ENCODE measurements at regions of chr4 and their contacts with region 1.

Region 1: DNA sequence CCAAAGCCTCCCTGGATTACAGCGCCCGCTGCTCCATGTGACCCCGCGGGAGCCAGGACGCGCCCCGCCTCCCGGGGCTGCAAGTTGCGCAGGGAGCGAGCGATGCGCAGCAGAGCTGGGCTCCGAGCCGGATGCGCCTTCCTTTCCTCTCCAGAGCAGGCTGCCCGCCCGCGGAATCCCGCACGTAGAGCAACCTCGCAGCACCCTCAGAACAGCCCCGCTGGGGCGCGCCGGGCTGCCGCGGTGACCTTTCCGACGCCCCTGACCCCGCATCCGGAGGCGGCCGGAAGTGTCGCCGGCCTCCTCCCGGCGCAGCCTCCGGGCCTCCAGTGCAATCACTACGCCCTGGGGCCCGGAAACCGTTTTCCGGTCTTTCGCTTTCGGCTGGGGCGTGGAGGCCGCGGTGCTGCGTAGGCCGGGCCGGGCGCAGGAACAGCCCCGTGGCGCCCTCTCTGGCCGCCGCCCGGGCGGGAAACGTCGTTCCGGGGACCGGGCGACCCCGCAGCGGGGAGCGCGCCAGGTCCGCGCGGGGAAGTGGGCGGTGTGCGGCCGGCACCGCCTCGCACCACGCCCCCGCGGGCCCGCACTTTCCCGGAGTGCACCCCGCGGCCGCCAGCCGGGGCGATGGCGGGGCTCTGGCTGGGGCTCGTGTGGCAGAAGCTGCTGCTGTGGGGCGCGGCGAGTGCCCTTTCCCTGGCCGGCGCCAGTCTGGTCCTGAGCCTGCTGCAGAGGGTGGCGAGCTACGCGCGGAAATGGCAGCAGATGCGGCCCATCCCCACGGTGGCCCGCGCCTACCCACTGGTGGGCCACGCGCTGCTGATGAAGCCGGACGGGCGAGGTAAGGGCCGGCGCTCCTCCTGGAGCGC is at the start of gene CYP4V2:
- DNase-seq: peak; percentile 88
- H3K4me3 Mint-ChIP-seq: peak within 1 kb of the TSS; percentile 86
- H3K27ac Mint-ChIP-seq: peak within 1 kb of the TSS; percentile 92
- H3K4me1 Mint-ChIP-seq: peaks cover 33% of the 10 kb centered on the region
- H3K27me3 Mint-ChIP-seq: no peaks in the 10 kb centered on the region
- total RNA-seq, gene CYP4V2: 3.3 TPM

Region 2: DNA sequence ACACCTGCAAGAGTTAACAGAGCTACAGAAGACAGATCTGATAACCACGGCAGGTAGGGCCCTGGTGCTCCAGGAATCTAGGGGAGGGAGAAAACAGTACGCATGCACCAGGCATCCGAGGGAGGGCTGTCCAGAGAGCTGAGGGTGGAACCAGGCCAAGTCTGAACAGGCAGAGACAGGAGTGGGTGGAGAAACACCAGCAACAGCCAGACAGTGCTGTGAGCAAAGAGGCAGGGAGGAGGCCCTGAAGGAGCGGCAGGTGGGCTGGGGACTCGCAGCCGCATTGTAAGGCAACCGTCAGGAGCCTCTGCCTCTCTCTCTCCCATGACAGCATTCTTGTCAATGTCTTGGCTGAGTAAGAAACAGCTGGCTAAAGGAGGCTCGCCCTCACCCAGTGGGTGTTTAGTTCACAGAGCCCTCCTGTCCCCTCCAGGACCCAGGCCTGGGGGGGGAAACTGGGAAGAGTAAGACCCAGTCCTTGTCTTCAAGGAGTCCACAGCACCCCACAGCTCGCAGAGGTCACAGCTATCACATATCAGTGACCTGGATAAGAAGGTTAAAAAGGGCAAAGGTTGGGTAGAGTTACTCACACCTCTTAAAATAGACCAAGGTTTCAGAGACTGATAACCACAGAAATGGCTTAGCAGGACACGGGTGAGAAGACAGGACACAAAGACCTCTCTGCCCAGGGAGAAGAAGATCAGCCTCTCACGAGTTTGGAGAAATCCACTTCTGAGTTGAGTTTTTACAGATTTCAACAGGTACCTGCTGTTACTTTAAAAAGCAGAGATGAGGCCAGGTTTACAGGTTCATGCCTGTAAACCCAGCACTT is 1376.2 kb before region 1 on chr4:
- CTCF ChIA-PET with region 1: no interaction called
- intact Hi-C with region 1: no loop called
- DNase-seq: no peak
- H3K4me3 Mint-ChIP-seq: no peak overlapping the region
- H3K27ac Mint-ChIP-seq: no peak overlapping the region
- H3K4me1 Mint-ChIP-seq: peaks cover 42% of the 10 kb centered on the region
- H3K27me3 Mint-ChIP-seq: no peaks in the 10 kb centered on the region

Region 3: GRCh38 chr4:185425647-185426352 is 765.6 kb before region 1 on chr4 and contains the start of gene UFSP2:
- CTCF ChIA-PET with region 1: no interaction called
- intact Hi-C with region 1: loop called (anchors 5 kb)
- DNase-seq: peak; percentile 86
- H3K4me3 Mint-ChIP-seq: peak within 1 kb of the TSS; percentile 76
- H3K27ac Mint-ChIP-seq: peak within 1 kb of the TSS; percentile 96
- H3K4me1 Mint-ChIP-seq: peaks cover 28% of the 10 kb centered on the region
- H3K27me3 Mint-ChIP-seq: peaks cover 1% of the 10 kb centered on the region
- total RNA-seq, gene UFSP2: 24.4 to 30.7 TPM

Region 4: GRCh38 chr4:186067757-186068385 is 123.6 kb before region 1 on chr4:
- CTCF ChIA-PET with region 1: interaction called, 6 read pairs
- intact Hi-C with region 1: loop called (anchors 1 kb)
- DNase-seq: peak; percentile 65
- H3K4me3 Mint-ChIP-seq: no peak overlapping the region
- H3K27ac Mint-ChIP-seq: no peak overlapping the region
- H3K4me1 Mint-ChIP-seq: peaks cover 11% of the 10 kb centered on the region
- H3K27me3 Mint-ChIP-seq: peaks cover 7% of the 10 kb centered on the region

Region 5: DNA sequence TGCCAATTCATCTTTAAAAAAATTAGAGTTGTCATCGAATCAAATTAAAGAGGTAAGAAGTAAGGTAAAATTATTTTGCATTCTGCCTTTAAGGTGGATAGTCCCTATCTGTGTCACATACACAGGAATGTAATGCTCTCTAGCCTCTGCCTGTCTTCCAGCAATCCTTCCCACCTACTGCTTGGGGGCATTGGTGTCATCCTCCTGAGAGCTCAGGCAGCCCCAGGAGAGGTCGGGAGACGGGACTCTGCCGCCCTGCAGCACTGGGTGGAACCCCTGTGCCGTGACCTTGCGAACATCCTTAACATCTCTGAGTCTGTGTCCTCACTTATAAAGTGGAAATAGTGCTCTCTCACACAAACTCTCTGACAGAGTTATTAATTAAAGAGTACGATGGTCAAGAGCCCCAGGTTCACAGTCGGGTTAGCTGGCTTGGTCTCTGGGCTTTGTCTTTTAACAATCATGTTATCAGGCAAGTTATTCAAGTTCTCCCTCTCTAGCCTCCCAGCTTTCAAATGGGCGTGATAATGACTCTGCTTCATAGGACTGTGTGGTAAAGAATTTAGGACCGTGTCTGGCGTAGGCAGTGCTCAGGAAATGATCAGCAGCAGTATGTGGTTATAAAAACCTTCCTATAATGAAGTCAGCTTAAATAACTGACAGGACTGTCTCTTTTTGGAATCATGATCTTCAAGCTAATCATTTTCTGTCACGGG is 112.3 kb before region 1 on chr4:
- CTCF ChIA-PET with region 1: no interaction called
- intact Hi-C with region 1: no loop called
- DNase-seq: no peak
- H3K4me3 Mint-ChIP-seq: no peak overlapping the region
- H3K27ac Mint-ChIP-seq: no peak overlapping the region
- H3K4me1 Mint-ChIP-seq: no peaks in the 10 kb centered on the region
- H3K27me3 Mint-ChIP-seq: peaks cover 3% of the 10 kb centered on the region

Region 6: GRCh38 chr4:186104114-186104889 is 87.1 kb before region 1 on chr4 and contains the start of gene FAM149A:
- CTCF ChIA-PET with region 1: no interaction called
- intact Hi-C with region 1: loop called (anchors 2 kb)
- DNase-seq: peak; percentile 64
- H3K4me3 Mint-ChIP-seq: peak within 1 kb of the TSS; percentile 66
- H3K27ac Mint-ChIP-seq: no peak within 1 kb of the TSS
- H3K4me1 Mint-ChIP-seq: peaks cover 7% of the 10 kb centered on the region
- H3K27me3 Mint-ChIP-seq: peaks cover 45% of the 10 kb centered on the region
- total RNA-seq, gene FAM149A: 0.36 to 0.42 TPM

Region 7: GRCh38 chr4:186144142-186144955 is 47.1 kb before region 1 on chr4:
- CTCF ChIA-PET with region 1: no interaction called
- intact Hi-C with region 1: loop called (anchors 2 kb)
- DNase-seq: peak; percentile 22
- H3K4me3 Mint-ChIP-seq: peak overlapping the region; percentile 65
- H3K27ac Mint-ChIP-seq: no peak overlapping the region
- H3K4me1 Mint-ChIP-seq: peaks cover 2% of the 10 kb centered on the region
- H3K27me3 Mint-ChIP-seq: peaks cover 37% of the 10 kb centered on the region

Region 8: GRCh38 chr4:186161138-186161537 is 30.3 kb before region 1 on chr4:
- CTCF ChIA-PET with region 1: no interaction called
- intact Hi-C with region 1: loop called (anchors 2 kb)
- DNase-seq: peak; percentile 63
- H3K4me3 Mint-ChIP-seq: peak overlapping the region; percentile 53
- H3K27ac Mint-ChIP-seq: no peak overlapping the region
- H3K4me1 Mint-ChIP-seq: peaks cover 4% of the 10 kb centered on the region
- H3K27me3 Mint-ChIP-seq: peaks cover 3% of the 10 kb centered on the region

Region 9: GRCh38 chr4:186201535-186202230 is 10.2 kb after region 1 on chr4:
- CTCF ChIA-PET with region 1: interaction called, 44 read pairs
- intact Hi-C with region 1: loop called (anchors 1 kb)
- DNase-seq: peak; percentile 79
- H3K4me3 Mint-ChIP-seq: peak overlapping the region; percentile 13
- H3K27ac Mint-ChIP-seq: peak overlapping the region; percentile 57
- H3K4me1 Mint-ChIP-seq: peaks cover 34% of the 10 kb centered on the region
- H3K27me3 Mint-ChIP-seq: no peaks in the 10 kb centered on the region

Region 10: GRCh38 chr4:186500721-186501304 is 309.4 kb after region 1 on chr4:
- CTCF ChIA-PET with region 1: no interaction called
- intact Hi-C with region 1: no loop called
- DNase-seq: no peak
- H3K4me3 Mint-ChIP-seq: no peak overlapping the region
- H3K27ac Mint-ChIP-seq: no peak overlapping the region
- H3K4me1 Mint-ChIP-seq: no peaks in the 10 kb centered on the region
- H3K27me3 Mint-ChIP-seq: peaks cover 2% of the 10 kb centered on the region